HepG2 (cell line): ENCODE measurements at regions of chr14 and their contacts with region 1.

Region 1: DNA sequence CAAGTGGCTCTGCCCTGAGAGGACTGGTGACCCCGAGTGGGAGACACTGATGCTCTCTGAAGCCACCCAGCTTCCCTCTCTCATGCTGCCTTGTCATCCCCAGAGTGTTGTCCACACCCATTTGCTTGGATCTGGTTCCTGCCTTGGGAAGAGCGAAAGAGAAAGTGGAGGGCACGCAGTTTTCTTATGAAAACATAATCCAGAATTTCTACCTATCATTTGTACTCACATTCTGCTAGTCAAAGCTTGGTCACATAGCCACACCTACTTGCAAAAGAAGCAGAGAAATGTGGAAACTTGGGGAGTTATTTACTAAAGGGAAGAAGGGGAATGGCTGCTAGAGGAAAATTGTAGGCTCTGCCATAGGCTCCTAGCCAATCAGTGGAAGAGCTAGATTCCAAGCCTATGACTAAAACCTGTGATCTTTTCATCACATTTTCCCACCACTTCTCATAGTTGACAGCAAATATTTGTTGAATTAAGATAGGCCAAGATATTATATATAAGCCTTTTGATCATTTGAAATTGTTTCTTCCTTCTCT is 326.3 kb downstream of the ZFP36L1 start:
- DNase-seq: peak; percentile 63
- ATAC-seq: no peak
- H3K4me3 ChIP-seq: no peak overlapping the region
- H3K27ac ChIP-seq: no peak overlapping the region
- H3K4me1 ChIP-seq: peaks cover 48% of the 10 kb centered on the region
- H3K27me3 ChIP-seq: no peaks in the 10 kb centered on the region
- CTCF ChIP-seq: no peak
- EP300 ChIP-seq: no peak
- POLR2A ChIP-seq: no peak
- RAD21 ChIP-seq: no peak

Region 2: GRCh38 chr14:68297876-68298469 is 168.6 kb before region 1 on chr14:
- CTCF ChIA-PET with region 1: no interaction called
- POLR2A ChIA-PET with region 1: no interaction called
- in situ Hi-C with region 1: no loop called
- intact Hi-C with region 1: loop called (anchors 10 kb)
- DNase-seq: peak; percentile 49
- ATAC-seq: no peak
- H3K4me3 ChIP-seq: no peak overlapping the region
- H3K27ac ChIP-seq: no peak overlapping the region
- H3K4me1 ChIP-seq: peaks cover 58% of the 10 kb centered on the region
- H3K27me3 ChIP-seq: no peaks in the 10 kb centered on the region
- CTCF ChIP-seq: peak; percentile 69
- EP300 ChIP-seq: no peak
- POLR2A ChIP-seq: no peak
- RAD21 ChIP-seq: peak; percentile 41

Region 3: GRCh38 chr14:68520637-68521556 is 54.3 kb after region 1 on chr14:
- CTCF ChIA-PET with region 1: no interaction called
- POLR2A ChIA-PET with region 1: interaction called, 4 read pairs
- in situ Hi-C with region 1: no loop called
- intact Hi-C with region 1: loop called (anchors 5 kb)
- DNase-seq: peak; percentile 86
- ATAC-seq: peak; percentile 75
- H3K4me3 ChIP-seq: peak overlapping the region in 2 of 3 experiments; percentile 47 to 67; a peak in 4 of 6 replicates
- H3K27ac ChIP-seq: peak overlapping the region; percentile 84
- H3K4me1 ChIP-seq: peaks cover 69% of the 10 kb centered on the region
- H3K27me3 ChIP-seq: no peaks in the 10 kb centered on the region
- CTCF ChIP-seq: no peak
- EP300 ChIP-seq: peak in 1 of 2 experiments; percentile 47; a peak in 1 of 4 replicates
- POLR2A ChIP-seq: no peak; a peak in 1 of 4 replicates
- RAD21 ChIP-seq: no peak